PC-3 (cell line): ENCODE measurements at regions of chr9 and their contacts with region 1.

Region 1: DNA sequence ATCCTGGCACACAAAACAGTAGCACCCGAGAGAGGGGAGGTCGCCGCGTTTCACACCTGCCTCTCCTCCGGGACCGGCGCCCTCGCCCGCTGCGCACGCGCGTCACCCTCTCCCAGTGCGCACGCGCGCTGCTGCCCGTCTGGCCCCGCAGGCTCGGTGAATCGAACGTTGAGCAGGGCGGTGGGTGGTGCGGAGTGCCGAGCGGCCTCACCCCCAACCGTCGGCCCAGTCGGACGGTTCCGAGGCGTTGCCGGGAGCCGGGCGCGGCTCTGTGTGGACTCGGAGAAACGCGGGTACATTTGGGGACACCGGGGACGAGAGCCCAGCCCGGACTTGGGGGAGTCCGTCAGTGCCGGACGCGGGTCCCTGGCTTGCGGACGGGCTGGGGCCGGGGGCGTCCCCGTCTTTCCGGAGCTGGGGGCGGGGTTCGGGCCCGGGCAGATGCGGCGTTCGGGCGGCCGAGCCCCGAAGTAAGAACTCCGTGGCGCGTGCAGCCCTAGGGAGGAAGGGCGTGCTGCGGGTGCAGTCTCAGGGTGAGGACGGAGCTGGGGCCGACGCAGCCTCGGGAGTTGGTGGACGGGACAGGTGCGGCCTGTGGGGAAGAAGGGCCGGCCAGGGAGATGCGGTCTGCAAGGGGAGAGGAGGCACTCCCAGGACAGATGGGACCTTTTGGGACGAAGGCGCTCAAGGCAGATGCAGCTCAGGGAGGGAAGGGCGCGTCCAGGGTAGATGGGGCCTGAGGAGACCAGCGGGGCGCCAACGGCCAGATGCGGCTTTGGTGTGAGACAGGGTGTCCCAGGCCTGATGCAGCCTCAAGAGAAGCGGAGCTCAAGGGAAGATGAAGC is at the start of gene POMT1:
- DNase-seq: peak; percentile 77
- ATAC-seq: peak; percentile 69
- H3K4me3 ChIP-seq: peak within 1 kb of the TSS; percentile 85
- H3K27ac ChIP-seq: no peak within 1 kb of the TSS
- H3K4me1 ChIP-seq: peaks cover 19% of the 10 kb centered on the region
- H3K27me3 ChIP-seq: no peaks in the 10 kb centered on the region
- CTCF ChIP-seq: no peak
- total RNA-seq, gene POMT1: 24.1 and 30.4 TPM in 2 replicates

Region 2: DNA sequence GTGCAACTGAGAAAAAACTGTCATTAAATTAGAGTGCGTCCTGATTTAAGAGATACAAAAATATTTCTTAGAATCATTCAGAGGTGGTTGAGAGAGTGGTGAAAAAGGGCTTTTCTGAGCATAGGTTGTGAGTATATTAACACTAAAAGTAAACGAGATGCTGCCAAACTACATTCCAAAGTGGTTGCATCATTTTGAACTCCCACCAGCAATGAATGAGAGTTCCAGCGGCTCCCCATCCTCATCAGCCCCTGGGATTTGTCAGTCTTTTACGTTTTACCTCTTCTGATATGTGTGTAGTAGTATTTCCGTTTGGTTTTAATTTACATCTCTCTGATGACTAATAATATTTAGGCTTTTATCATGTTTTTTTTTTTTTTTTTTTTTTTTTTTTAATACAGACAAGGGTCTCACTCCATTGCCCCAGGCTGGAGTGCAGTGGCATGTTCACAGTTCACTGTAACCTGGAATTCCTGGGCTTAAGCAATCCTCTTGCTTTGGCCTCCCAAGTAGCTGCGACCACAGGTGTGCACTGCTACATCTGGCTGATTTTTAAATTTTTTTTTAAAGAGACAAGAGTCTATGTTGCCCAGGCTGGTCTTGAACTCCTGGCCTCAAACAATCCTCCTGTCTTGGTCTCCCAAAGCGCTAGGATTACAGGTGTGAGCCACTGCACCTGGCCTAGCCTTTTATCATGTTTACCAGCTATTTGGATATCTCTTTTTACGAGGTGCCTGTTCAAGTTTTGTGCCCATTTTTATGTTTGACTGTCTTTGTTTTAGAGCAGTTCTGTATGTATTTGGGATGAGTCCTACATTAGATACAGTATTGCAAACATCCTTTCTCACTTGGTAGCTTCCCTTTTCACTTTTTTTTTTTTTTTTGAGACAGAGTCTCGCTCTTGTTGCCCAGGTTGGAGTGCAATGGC is 59.3 kb after region 1 on chr9:
- CTCF ChIA-PET with region 1: no interaction called
- POLR2A ChIA-PET with region 1: no interaction called
- intact Hi-C with region 1: loop called (anchors 5 kb)
- DNase-seq: peak; percentile 87
- ATAC-seq: peak; percentile 73
- H3K4me3 ChIP-seq: peak overlapping the region; percentile 53
- H3K27ac ChIP-seq: peak overlapping the region; percentile 18; the same call in 1 of the 2 replicates
- H3K4me1 ChIP-seq: peaks cover 12% of the 10 kb centered on the region
- H3K27me3 ChIP-seq: no peaks in the 10 kb centered on the region
- CTCF ChIP-seq: no peak

Region 3: GRCh38 chr9:131733541-131734061 is 230.6 kb after region 1 on chr9:
- CTCF ChIA-PET with region 1: no interaction called
- POLR2A ChIA-PET with region 1: no interaction called
- intact Hi-C with region 1: no loop called
- DNase-seq: peak; percentile 94
- ATAC-seq: peak; percentile 88
- H3K4me3 ChIP-seq: peak overlapping the region; percentile 37; the same call in 1 of the 2 replicates
- H3K27ac ChIP-seq: peak overlapping the region; percentile 95
- H3K4me1 ChIP-seq: peaks cover 59% of the 10 kb centered on the region
- H3K27me3 ChIP-seq: no peaks in the 10 kb centered on the region
- CTCF ChIP-seq: no peak